BJ (cell line): ENCODE measurements at regions of chr2 and their contacts with region 1.

Region 1: DNA sequence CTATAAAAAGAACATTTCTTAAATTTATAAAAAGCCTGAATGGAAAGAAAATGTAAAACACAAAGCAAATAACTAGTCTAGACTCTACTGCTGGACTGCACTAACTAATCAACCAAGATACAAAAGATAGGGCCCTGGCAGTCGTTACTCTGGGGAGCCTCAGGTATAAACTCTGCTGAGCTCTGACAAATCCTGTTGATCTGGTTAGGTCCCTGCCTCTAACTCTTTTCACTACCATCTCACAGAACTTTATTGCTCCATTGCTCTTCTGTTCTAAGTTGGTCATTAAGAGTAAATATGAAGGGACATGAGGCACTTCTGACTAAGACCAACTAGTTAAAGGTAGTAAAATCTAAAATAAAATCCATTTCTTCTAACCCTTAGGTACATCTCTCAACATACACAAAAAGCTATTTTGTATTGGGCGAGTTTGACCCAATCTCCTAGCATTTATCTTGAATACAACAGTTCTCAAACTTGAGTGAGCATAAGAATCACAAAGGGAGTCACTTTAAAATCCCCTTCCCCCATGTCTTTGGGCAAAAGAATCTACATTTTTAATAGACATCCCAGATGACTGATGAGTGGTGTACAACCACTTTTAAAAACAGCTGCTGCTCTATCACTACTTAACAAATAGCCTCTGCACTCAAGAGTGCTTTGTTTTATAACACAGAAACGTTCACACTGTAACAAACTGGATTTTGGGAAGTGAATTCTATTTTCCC is 2.5 kb downstream of the CHN1 start:
- DNase-seq: no peak
- H3K4me3 ChIP-seq: no peak overlapping the region
- H3K27me3 ChIP-seq: peaks cover 4% of the 10 kb centered on the region
- CTCF ChIP-seq: no peak

Region 2: DNA sequence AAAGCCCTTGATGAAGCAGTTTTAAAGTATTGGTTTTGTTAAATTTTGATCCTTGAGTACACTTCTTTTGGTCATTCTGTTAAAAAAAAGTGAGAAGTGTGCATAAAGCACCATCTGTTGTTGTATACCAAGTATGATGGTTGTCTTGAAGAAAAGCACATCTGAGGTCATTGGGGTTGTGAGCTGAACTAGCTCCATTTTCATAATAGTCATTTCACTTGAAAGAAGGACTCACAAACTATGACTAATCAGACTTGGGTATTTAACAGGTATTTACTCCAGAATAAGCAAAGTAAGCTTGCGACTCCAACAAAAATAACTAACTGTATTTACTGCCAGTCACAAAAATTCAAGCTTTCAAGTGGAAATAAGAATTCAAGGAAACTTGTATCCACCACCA is 32.6 kb before region 1 on chr2:
- CTCF ChIA-PET with region 1: no interaction called
- POLR2A ChIA-PET with region 1: interaction called, 10 read pairs
- DNase-seq: no peak
- H3K4me3 ChIP-seq: no peak overlapping the region
- H3K27me3 ChIP-seq: no peaks in the 10 kb centered on the region
- CTCF ChIP-seq: no peak